Dorsolateral prefrontal cortex (tissue), 120 donors: ENCODE measurements at regions of chr19 and their contacts with region 1.

Region 1: DNA sequence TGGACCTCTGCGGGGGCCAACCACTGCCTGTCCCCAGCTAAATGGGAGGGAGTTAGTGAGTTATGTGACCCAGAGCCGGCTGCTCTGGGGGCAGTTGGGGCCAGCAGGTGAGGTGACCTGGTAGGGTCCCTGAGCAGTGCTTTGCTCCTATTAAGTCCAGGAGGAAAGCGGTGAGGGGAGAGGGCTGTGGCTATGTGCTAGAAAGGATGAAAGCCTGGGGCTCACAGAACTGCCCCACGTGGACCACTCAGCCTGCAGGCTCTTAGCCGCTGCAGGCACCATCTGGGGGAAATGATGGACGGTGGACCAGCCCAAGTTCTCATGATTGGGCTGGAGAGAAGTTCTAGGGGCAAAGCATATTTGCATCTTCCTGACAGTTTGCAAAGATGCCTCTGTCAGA is 67.6 kb upstream of the ZNF536 start:
- DNase-seq: no peak
- H3K4me3 ChIP-seq: no peak overlapping the region
- H3K27ac ChIP-seq: peak overlapping the region in 27 of 59 donors; percentile 0 to 83 (median 61)
- H3K27me3 ChIP-seq: no peaks in the 10 kb centered on the region
- CTCF ChIP-seq: no peak

Region 2: DNA sequence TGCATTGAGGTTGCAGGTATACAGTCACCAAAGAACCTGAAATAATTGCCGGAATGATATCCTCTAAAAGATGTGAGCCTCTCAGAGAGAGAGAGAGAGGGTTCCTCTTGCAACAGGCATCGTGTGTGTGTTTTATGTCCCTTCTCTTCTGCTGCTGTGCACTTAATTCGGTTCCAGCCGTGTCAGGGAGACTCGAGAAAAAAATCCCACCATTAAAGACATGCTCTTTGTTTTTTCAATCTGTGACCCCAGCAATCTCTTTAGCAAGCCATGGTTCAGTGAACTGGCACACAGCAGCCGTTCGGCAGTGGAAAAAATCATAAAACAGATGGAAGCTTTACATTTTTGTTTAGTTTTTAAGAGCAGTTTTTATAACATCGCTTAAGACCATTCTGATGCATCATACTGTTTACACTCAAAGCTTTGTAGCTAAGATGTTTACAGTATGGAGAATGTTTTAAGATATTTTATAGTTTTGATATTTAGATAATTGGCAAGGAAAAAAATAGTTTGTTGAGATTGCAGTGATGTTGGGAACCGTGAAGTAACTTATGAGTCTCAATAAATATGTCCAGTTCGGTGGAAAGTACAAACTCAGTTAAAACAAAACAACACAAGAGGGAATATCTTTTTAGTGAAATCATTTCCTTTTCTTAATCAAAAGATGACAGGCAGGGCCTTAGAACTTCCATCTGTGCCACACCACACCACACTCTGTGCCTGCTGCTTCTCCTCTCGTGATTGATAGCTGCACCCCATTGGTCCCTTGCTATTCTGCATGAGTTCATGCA is 36.4 kb after region 1 on chr19:
- intact Hi-C with region 1: loop called in 1 of 2 experiments (anchors 5 kb)
- DNase-seq: peak in 1 of 10 donors; percentile 28
- H3K4me3 ChIP-seq: peak overlapping the region in 1 of 59 donors; percentile 3
- H3K27ac ChIP-seq: peak overlapping the region in 51 of 59 donors; percentile 6 to 84 (median 57)
- H3K27me3 ChIP-seq: no peaks in the 10 kb centered on the region
- CTCF ChIP-seq: no peak